ENCODE measurements at regions of chrX and their contacts with region 1.

Region 1: DNA sequence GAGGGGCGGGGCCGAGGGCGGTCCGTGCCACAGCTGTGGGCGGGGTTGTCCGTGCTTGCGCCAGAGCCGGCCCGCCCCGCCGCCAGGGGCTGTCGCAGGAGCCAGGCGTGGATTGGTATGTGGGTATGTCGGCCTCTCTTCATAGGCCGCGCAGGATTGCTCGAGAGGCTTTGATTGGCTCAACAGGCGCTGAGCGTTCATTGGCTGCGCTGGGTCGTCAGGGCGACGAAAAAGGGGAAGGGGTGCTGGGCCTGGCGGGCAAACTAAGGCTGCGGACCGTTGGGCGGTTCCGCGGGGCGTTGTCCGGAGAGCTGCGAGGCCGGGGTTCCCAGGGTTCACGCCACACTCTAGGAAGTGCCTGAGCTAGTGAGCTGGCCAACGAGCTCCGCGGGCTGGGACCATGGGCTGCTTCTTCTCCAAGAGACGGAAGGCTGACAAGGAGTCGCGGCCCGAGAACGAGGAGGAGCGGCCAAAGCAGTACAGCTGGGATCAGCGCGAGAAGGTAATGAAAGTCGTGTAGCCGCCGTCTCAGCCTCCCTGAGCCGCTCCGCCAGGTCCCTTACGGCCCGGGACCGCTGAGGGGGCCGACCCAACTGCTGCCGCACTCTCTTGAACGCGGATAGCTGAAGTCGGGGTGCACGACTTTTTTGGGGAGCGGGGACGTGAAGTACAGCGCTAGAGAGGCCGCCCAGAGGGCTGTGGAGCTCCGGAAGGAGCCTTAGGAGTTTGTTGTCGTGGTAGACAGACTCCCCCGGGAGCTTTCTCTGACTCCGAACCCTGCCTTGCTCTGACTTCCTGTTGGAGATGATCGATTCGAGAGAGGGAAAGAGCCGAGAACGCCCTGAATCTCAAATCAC is at the start of gene RP2:
- DNase-seq: peak; percentile 82
- H3K4me3 Mint-ChIP-seq: peak within 1 kb of the TSS; percentile 97
- H3K27ac Mint-ChIP-seq: peak within 1 kb of the TSS; percentile 94
- H3K4me1 Mint-ChIP-seq: peaks cover 6% of the 10 kb centered on the region
- H3K27me3 Mint-ChIP-seq: peaks cover 6% of the 10 kb centered on the region
- total RNA-seq, gene RP2: 8.8 and 9.6 TPM in 2 replicates

Region 2: DNA sequence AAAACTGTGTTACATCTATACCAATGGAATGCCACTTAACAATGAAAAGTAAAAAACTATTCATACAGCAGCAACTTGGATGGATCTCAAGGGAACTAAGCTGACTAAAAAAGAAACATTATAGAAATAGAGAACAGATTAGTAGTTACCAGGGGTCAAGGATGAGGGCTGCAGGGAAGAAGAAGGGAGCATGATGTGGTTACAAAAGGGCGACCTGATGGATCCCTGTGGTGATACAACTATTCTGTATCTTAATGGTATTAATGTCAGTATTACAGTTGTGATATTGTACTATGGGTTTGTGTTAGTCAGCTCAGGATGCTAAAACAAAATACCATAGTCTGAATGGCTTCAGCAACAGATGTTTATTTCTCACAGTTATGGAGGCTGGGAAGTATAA is 482.4 kb before region 1 on chrX:
- intact Hi-C with region 1: no loop called
- DNase-seq: no peak
- H3K4me3 Mint-ChIP-seq: no peak overlapping the region
- H3K27ac Mint-ChIP-seq: no peak overlapping the region
- H3K4me1 Mint-ChIP-seq: no peaks in the 10 kb centered on the region
- H3K27me3 Mint-ChIP-seq: no peaks in the 10 kb centered on the region

Region 3: GRCh38 chrX:46446727-46447378 is 390.1 kb before region 1 on chrX:
- intact Hi-C with region 1: loop called (anchors 5 kb)
- DNase-seq: peak; percentile 77
- H3K4me3 Mint-ChIP-seq: peak overlapping the region; percentile 84
- H3K27ac Mint-ChIP-seq: peak overlapping the region; percentile 90
- H3K4me1 Mint-ChIP-seq: peaks cover 19% of the 10 kb centered on the region
- H3K27me3 Mint-ChIP-seq: no peaks in the 10 kb centered on the region

Region 4: GRCh38 chrX:46588263-46588662 is 248.7 kb before region 1 on chrX:
- intact Hi-C with region 1: loop called (anchors 1 kb)
- DNase-seq: no peak
- H3K4me3 Mint-ChIP-seq: peak overlapping the region; percentile 65
- H3K27ac Mint-ChIP-seq: peak overlapping the region; percentile 84
- H3K4me1 Mint-ChIP-seq: peaks cover 21% of the 10 kb centered on the region
- H3K27me3 Mint-ChIP-seq: no peaks in the 10 kb centered on the region

Region 5: GRCh38 chrX:46758906-46759644 is 77.9 kb before region 1 on chrX and contains the start of gene SLC9A7:
- intact Hi-C with region 1: loop called (anchors 2 kb)
- DNase-seq: peak; percentile 76
- H3K4me3 Mint-ChIP-seq: peak within 1 kb of the TSS; percentile 98
- H3K27ac Mint-ChIP-seq: peak within 1 kb of the TSS; percentile 94
- H3K4me1 Mint-ChIP-seq: peaks cover 27% of the 10 kb centered on the region
- H3K27me3 Mint-ChIP-seq: no peaks in the 10 kb centered on the region
- total RNA-seq, gene SLC9A7: 42.5 and 44.2 TPM in 2 replicates

Measured in activated T-helper 2 cell treated with anti-CD3 and anti-CD28 coated beads, Interferon-gamma antibody, Interleukin-2, Interleukin-4, amounts not matched to agents 10 μg/mL and 5 μg/mL and 100 μg/mL, durations not matched to agents 14 hours and 24 hours and 36 hours (primary cell).